Ovary (tissue), 10 donors: ENCODE measurements at regions of chr15 and their contacts with region 1.

Region 1: GRCh38 chr15:25022233-25022632 is 67.4 kb downstream of the SNRPN start:
- DNase-seq: no peak
- H3K4me3 ChIP-seq: no peak overlapping the region
- H3K27ac ChIP-seq: no peak overlapping the region
- H3K4me1 ChIP-seq: no peaks in the 10 kb centered on the region
- H3K27me3 ChIP-seq: no peaks in the 10 kb centered on the region
- CTCF ChIP-seq: no peak
- EP300 ChIP-seq: no peak
- POLR2A ChIP-seq: no peak

Region 2: DNA sequence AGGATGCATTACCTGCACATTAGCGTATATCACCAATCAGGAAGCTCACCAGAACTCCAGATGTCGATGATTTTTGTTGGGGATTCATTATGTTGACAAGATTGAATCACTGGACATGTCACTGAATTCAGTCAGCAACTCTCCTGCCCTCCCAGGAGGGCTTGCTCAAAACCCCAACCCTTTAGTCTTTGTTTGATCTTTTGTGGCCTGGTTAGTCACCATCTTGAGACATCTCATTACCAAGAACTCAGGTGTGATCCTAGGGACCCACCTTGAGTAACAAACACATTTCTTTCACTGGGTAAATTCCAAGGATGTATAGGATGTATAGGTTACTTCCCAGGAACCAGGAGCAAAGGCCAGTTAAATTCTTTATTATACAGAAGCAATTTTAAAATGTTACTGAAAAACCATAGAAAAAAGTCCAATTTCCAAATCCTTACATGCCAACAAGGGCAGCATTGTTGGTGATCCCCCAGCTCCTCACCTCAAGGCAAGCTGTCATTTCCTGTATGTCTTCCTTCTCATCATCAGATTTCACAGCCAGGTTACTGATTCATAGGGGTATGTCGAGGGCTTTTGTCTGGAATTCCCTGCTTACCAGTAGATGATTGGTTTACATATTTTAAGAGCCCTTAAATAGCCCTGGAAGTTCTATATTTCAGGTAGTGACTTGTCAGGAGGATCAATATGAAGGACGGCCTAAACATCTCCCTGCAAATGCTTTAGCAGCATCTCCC is 55.7 kb before region 1 on chr15:
- intact Hi-C with region 1: loop called in 1 of 4 experiments (anchors 10 kb)
- DNase-seq: no peak
- H3K4me3 ChIP-seq: no peak overlapping the region
- H3K27ac ChIP-seq: no peak overlapping the region
- H3K4me1 ChIP-seq: no peaks in the 10 kb centered on the region
- H3K27me3 ChIP-seq: no peaks in the 10 kb centered on the region
- CTCF ChIP-seq: no peak
- EP300 ChIP-seq: no peak
- POLR2A ChIP-seq: no peak

Region 3: GRCh38 chr15:24985224-24985623 is 37.0 kb before region 1 on chr15:
- intact Hi-C with region 1: no loop called
- DNase-seq: no peak
- H3K4me3 ChIP-seq: no peak overlapping the region
- H3K27ac ChIP-seq: no peak overlapping the region
- H3K4me1 ChIP-seq: no peaks in the 10 kb centered on the region
- H3K27me3 ChIP-seq: no peaks in the 10 kb centered on the region
- CTCF ChIP-seq: no peak
- EP300 ChIP-seq: no peak
- POLR2A ChIP-seq: no peak

Region 4: DNA sequence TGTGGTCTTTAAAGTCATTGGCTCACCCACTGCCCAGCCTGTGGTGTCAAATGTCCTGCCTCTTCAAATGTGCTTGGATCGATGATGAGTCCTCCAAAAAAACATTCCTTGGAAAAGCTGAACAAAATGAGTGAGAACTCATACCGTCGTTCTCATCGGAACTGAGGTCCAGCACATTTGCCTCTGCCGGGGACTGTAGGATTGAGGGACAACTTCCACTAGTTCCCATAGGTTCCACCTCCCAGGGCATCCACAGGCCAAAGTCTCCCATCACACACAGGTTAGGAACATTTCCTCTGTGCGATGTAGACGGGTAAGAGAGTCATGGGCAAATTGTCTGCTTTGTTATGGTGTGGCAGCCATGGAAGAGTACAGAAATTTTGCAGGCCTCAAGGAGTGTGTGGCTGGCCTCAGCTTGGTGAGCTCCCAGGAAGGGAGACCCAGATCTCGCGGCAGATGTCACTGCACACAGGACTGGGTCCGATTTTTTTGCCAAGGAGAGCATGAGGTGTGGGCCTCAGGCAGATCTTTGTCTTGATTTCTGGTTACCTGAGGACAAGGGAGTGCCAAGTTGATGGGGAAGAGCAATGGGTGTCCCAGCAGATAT is 48.2 kb after region 1 on chr15:
- intact Hi-C with region 1: loop called in 1 of 4 experiments (anchors 10 kb)
- DNase-seq: no peak
- H3K4me3 ChIP-seq: no peak overlapping the region
- H3K27ac ChIP-seq: no peak overlapping the region
- H3K4me1 ChIP-seq: no peaks in the 10 kb centered on the region
- H3K27me3 ChIP-seq: no peaks in the 10 kb centered on the region
- CTCF ChIP-seq: no peak
- EP300 ChIP-seq: no peak
- POLR2A ChIP-seq: no peak